ENCODE measurements at regions of chr9 and their contacts with region 1.

Region 1: GRCh38 chr9:127943731-127944144 is 6.1 kb upstream of the DPM2 start:
- DNase-seq: peak; percentile 92 to 96
- ATAC-seq: peak; percentile 87
- H3K4me3 ChIP-seq: no peak overlapping the region
- H3K27ac ChIP-seq: no peak overlapping the region
- H3K4me1 ChIP-seq: no peaks in the 10 kb centered on the region
- H3K27me3 ChIP-seq: no peaks in the 10 kb centered on the region

Region 2: DNA sequence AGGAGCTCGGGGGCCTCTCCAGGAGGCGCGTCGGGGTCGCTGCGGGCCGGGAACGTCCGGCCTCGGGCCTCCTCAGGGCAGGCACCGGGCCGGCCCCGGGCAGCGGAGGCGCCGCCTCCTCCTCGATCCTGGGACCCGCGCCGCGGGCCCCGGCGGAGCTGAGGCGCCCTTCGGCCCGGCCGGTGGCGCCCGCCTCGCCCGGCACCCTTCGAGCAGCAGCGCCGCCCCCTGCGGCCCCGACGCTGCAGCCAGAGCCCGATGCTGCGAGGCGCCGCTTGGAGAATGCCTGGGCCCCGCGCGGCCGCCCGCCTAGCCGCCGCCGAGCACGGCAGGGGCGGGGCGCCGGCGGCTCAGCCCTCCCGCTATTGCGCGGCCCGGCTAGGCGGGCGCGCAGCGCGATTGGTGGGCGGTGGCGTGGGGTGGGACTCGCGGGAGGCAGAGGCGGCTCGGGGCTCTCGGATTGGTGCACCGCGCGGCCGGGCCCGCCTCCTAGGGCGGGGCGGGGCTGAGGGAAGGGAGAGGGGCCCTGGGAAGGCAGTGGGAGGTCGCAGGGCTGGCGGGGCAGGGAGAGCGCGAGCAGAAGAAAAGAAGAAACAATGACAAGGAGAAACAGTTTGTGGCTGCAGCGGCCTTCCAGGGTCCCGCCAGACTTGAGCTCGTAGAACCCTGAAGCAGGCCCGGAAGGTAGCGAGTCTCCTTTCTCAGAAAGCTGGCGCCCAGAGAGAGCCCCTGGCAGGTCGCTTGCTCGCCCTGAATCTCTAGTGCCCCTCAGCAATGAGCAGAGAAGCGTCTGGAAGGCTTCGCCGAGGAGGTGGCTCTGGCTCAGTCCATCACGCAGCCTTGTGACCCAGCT is 37.2 kb after region 1 on chr9 and contains the start of gene EEIG1:
- intact Hi-C with region 1: loop called in 1 of 2 experiments (anchors 5 kb)
- DNase-seq: peak; percentile 98 to 99
- ATAC-seq: peak; percentile 97
- H3K4me3 ChIP-seq: peak within 1 kb of the TSS; percentile 27 to 87
- H3K27ac ChIP-seq: peak within 1 kb of the TSS; percentile 1 to 93
- H3K4me1 ChIP-seq: peaks cover 0 to 2% of the 10 kb centered on the region in 2 donors
- H3K27me3 ChIP-seq: no peaks in the 10 kb centered on the region
- total RNA-seq, gene EEIG1: 41.4 to 63.1 TPM

Region 3: DNA sequence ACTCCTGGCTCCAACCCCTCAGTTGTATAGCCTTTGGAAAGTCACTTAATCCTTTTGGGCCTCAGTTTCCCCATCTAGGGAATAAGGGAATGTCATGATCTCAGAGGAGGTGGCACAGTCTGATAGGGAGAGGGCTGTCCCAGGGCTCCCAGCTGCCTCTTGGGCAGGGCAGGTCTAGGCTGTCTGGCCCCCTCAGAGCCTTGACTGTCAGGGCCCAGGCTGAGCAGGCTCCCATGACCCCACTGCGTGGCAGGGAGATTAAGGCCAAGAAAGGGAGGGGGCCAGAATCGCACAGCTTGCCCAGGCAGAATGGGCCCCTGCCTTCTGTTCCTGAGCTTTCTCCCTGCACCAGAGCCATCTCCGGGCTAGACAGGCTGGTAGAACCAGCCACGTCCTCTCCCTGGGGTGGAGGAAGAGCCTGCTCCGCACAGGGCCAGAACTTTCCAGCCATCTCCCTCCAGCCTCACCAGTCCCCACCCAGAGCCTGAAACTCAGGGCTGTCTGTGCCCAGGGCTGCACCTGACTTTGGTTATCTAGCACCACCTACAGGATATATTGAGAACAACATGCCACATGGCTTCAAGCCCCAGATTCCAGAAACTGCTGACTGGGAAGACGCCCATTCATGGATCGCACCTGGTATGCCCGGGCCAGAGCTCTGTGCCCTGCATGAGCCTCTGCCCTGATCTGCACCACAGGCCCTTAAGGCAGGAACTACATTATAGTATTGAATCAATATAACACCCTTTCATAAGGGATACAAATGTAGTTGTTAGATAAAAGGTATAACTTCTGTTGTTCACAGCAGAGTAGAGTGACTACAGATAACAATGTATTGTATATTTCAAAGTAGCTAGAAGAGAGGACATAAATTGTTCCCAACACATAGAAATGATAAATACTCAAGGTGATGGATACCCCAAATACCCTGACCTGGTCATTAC is 91.4 kb after region 1 on chr9:
- intact Hi-C with region 1: loop called (anchors 1 to 2 kb)
- DNase-seq: peak; percentile 74 to 80
- ATAC-seq: peak; percentile 96
- H3K4me3 ChIP-seq: no peak overlapping the region
- H3K27ac ChIP-seq: no peak overlapping the region
- H3K4me1 ChIP-seq: no peaks in the 10 kb centered on the region
- H3K27me3 ChIP-seq: no peaks in the 10 kb centered on the region

Region 4: DNA sequence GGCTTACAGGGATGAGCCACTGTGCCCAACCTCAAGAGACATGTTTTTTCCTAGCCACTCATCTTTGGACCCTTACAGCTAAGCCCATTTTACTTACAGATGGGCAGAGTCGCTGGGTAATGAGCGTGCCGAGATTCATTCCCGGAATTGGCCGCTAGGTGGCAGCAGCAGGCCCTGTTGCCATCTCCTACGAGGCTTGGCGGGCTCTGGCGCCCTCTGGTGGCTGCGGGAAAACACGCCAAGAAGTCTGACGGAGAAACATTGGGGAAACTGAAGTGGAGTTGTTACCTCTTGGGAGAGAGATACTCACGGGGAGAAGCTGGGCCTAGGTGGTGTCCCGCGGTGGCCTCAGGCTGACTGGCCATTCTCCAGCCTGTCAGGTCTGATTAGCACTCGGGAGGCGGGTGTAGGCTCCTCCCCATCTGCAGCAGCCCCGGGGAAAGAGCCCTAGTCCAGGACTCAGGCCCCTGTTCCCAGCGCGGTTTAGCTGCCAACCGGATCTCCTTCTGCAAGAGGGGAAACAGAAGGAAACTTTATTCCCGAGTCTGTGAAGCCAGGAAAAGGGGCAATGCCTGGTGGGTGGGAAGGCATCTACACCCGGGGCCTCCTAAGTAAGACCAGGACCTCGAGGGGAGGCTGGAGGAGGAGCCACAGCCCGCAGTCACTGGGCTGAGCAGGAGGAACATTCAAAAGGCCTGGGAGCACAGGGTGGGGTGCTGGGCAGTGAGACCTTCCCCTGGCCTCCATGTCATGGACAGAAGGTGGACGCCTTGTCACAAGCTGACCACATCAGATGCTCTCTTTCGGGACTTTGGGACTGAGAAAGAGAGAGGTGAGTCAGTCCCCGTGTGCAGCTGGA is 174.1 kb after region 1 on chr9:
- intact Hi-C with region 1: loop called (anchors 5 kb)
- DNase-seq: peak; percentile 95 to 100
- ATAC-seq: peak; percentile 91
- H3K4me3 ChIP-seq: no peak overlapping the region
- H3K27ac ChIP-seq: no peak overlapping the region
- H3K4me1 ChIP-seq: no peaks in the 10 kb centered on the region
- H3K27me3 ChIP-seq: no peaks in the 10 kb centered on the region

Region 5: GRCh38 chr9:128127990-128128835 is 184.5 kb after region 1 on chr9:
- intact Hi-C with region 1: no loop called
- DNase-seq: peak; percentile 86 to 94
- ATAC-seq: peak; percentile 95
- H3K4me3 ChIP-seq: peak overlapping the region; percentile 63 to 69
- H3K27ac ChIP-seq: peak overlapping the region in 1 of 2 donors; percentile 71
- H3K4me1 ChIP-seq: no peaks in the 10 kb centered on the region
- H3K27me3 ChIP-seq: no peaks in the 10 kb centered on the region